CD8-positive, alpha-beta T cell (primary cell): ENCODE measurements at regions of chr9 and their contacts with region 1.

Region 1: DNA sequence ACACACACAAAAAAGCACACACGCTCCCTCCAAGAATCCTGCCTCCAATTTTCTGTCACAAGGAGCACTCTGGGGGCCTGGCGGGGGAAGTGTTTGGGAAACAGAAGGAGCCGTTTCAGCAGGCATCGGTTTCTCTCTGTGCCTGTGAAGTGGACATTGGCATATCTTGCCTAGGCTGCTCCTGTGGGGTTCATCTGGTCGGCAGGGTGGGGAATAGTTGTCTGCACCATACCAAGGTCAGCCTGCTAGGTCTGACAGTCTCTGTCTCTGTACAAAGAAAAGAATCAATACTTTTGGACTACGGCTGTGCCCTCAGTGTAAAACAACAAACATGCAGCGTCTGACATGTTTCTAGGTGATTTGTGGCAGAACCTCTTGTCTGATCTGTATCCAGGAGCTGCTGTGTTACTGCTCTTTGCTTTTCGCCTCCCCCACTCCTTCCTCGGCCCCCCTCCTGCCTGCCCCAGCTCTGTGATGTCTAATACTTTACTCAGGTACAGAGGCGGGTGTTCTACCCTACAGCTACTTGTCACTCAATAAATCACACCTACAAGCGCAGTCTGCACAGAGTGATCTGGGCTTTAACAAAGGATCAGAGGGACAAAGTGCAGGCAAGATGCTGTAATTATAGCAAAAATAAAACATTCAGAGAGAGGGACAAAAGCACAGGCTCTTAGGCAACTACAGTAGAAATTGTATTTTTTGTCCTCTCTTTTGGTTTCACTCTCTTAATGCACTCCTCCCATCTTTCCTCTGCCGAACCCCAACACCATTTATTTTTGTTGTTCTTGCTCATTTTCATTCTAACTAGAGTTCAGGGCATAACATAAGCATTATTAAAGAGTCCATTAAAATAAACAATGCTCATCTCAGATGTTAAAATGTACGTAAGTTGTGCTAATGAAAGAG is 216.7 kb downstream of the BNC2 start:
- DNase-seq: no peak
- ATAC-seq: no peak
- H3K4me3 ChIP-seq: no peak overlapping the region
- H3K4me3 Mint-ChIP-seq: no peak overlapping the region
- H3K27ac ChIP-seq: no peak overlapping the region
- H3K27ac Mint-ChIP-seq: no peak overlapping the region
- H3K4me1 ChIP-seq: no peaks in the 10 kb centered on the region
- H3K4me1 Mint-ChIP-seq: no peaks in the 10 kb centered on the region
- H3K27me3 ChIP-seq: no peaks in the 10 kb centered on the region
- H3K27me3 Mint-ChIP-seq: peaks cover 2% of the 10 kb centered on the region
- CTCF ChIP-seq: no peak

Region 2: GRCh38 chr9:16671591-16672137 is 17.9 kb after region 1 on chr9:
- CTCF ChIA-PET with region 1: no interaction called
- POLR2A ChIA-PET with region 1: no interaction called
- intact Hi-C with region 1: loop called in 1 of 2 experiments (anchors 2 kb)
- DNase-seq: no peak
- ATAC-seq: no peak
- H3K4me3 ChIP-seq: no peak overlapping the region
- H3K4me3 Mint-ChIP-seq: no peak overlapping the region
- H3K27ac ChIP-seq: no peak overlapping the region
- H3K27ac Mint-ChIP-seq: no peak overlapping the region
- H3K4me1 ChIP-seq: no peaks in the 10 kb centered on the region
- H3K4me1 Mint-ChIP-seq: no peaks in the 10 kb centered on the region
- H3K27me3 ChIP-seq: no peaks in the 10 kb centered on the region
- H3K27me3 Mint-ChIP-seq: no peaks in the 10 kb centered on the region
- CTCF ChIP-seq: no peak